Panc1 (cell line): ENCODE measurements at regions of chr2 and their contacts with region 1.

Region 1: GRCh38 chr2:58739033-58739432 is 497.9 kb upstream of the FANCL start:
- DNase-seq: no peak
- ATAC-seq: no peak
- H3K4me3 ChIP-seq: no peak overlapping the region
- H3K27ac ChIP-seq: no peak overlapping the region
- H3K4me1 ChIP-seq: no peaks in the 10 kb centered on the region
- H3K27me3 ChIP-seq: no peaks in the 10 kb centered on the region
- CTCF ChIP-seq: no peak

Region 2: DNA sequence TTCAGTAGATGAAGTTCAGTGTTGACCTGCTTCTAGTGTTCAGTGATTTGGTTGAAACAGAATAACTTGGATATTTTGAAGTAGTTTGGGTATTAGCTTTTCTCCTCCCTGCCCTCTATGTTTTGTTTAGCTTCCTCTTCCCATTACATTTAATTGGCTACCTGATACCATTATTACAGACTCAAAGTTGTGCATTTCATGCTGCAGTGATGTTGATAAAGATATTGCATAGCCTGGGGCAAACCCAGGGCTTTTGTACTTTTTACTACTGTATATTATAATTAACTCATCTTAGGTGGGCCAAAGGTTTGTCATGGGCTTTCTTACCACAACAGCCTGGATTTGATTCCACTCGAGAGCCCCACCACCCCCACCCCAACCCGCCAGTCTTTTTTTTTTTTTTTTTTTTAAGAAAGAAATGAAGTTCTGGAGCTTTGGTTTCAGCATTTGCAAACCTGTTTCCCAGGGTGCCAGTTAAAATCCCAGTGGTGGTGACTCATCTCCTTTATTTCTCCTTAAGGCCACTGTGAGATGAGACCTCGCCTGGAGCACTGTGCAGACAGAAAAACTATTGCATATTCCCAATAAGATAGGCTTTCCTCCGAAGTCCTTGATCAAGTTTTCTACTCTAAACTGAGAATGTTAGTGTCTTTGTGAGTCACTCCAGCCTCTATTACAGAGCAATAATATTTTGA is 104.2 kb before region 1 on chr2:
- CTCF ChIA-PET with region 1: no interaction called
- POLR2A ChIA-PET with region 1: interaction called, 11 read pairs
- in situ Hi-C with region 1: no loop called
- intact Hi-C with region 1: no loop called
- DNase-seq: no peak
- ATAC-seq: peak; percentile 89
- H3K4me3 ChIP-seq: no peak overlapping the region
- H3K27ac ChIP-seq: peak overlapping the region; percentile 74
- H3K4me1 ChIP-seq: peaks cover 29% of the 10 kb centered on the region
- H3K27me3 ChIP-seq: no peaks in the 10 kb centered on the region
- CTCF ChIP-seq: no peak

Region 3: DNA sequence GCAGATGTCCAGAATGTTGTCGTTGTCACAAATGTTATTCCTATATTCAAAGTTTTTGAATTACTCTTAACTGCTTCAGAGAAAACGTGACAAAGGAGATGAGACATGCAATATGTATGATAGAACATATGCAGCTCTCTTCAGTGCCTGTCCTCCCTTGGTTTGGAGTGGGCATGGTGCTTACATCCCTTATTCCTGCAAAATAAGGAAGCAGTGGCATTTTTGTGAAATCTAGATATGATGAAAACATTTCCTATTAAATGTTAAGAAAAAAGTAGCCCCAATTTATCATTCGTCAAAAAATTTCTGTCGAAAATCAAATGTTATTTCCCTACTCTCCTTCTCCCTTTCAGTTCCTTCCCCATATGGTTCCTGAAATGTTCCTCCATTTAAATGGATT is 40.4 kb before region 1 on chr2:
- CTCF ChIA-PET with region 1: no interaction called
- POLR2A ChIA-PET with region 1: no interaction called
- in situ Hi-C with region 1: no loop called
- intact Hi-C with region 1: no loop called
- DNase-seq: no peak
- ATAC-seq: no peak
- H3K4me3 ChIP-seq: no peak overlapping the region
- H3K27ac ChIP-seq: no peak overlapping the region
- H3K4me1 ChIP-seq: no peaks in the 10 kb centered on the region
- H3K27me3 ChIP-seq: no peaks in the 10 kb centered on the region
- CTCF ChIP-seq: no peak